CD4-positive, alpha-beta T cell (primary cell): ENCODE measurements at regions of chrX and their contacts with region 1.

Region 1: DNA sequence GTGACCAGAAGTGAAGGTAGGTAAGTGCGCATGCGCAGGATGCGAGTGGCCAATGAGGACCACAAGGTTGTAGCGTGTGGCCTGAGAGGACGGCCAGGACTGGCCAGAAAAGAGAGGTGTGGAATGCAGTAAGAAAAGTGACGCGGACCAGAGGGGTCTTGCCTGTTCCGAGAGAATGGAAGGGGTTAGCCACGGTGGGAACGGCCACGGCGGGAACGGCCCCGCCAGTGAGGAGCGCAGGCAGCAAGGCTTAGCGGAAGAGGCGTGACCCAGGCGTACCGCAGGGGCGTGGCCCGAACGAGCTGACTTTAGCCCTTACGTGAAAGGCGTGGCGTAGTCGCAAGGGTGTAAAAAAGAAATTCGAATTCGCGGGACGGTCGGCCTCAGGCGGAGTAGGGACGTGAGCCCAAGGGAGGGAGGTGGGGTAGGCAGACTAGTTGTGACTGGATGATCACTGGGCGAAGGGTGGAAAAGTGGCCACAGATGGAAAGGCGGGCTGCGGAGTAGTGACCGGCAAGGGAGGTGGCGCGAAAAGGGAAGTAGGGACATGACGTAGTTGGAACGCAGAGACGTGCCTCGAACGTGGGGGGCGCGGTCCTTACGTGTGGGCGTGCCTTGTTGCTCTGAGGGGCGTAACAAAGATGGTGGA is 10.4 kb upstream of the CLTRN start:
- DNase-seq: peak; percentile 78 to 96 (median 86)
- ATAC-seq: peak; percentile 83
- H3K4me3 ChIP-seq: peak overlapping the region; percentile 90
- H3K4me3 Mint-ChIP-seq: no peak overlapping the region
- H3K27ac ChIP-seq: peak overlapping the region; percentile 99 to 100
- H3K27ac Mint-ChIP-seq: no peak overlapping the region
- H3K4me1 ChIP-seq: peaks cover 16% of the 10 kb centered on the region
- H3K4me1 Mint-ChIP-seq: no peaks in the 10 kb centered on the region
- H3K27me3 ChIP-seq: peaks cover 0 to 4% of the 10 kb centered on the region in 2 experiments
- H3K27me3 Mint-ChIP-seq: no peaks in the 10 kb centered on the region
- CTCF ChIP-seq: no peak

Region 2: DNA sequence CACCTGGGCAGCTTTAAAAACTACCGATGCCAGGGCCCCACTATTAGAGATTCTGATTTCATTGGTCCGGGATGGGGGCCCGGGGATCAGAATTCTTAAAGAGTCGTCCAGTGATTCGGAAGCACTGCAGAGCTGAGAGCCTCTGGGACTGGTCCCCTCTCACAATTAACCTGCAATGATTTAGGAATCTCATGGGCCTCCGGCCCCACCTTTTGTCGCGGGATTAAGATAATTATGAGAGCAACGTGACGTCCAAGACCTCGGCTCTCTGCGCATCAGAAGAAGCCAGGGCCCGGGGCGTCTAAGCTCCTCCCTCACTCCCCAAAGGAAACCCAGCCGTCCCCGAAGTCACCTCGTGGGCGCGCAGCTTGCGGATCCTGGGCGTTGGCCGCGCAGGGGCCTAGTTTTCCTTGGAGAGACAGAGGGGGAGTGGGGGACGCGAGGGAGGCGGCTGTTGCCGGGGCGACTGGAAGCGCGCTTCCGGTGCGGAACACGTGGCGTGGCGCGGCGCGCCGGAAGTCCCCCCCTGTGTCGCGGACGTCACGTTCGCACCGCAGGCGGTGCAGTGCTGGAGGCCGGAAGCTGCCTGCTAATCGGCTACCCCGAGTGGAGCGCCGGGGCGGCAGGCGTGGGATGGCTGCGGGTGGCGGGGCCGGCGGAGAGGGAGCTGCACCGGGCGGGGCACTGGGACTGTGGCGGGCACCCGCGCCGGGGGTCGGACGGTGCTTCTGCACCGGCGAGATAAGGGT is 1645.4 kb before region 1 on chrX and contains the start of gene GEMIN8:
- CTCF ChIA-PET with region 1: no interaction called
- POLR2A ChIA-PET with region 1: no interaction called
- intact Hi-C with region 1: loop called in 1 of 2 experiments (anchors 10 kb)
- DNase-seq: peak; percentile 73 to 94 (median 84)
- ATAC-seq: peak; percentile 85
- H3K4me3 ChIP-seq: peak within 1 kb of the TSS; percentile 82
- H3K4me3 Mint-ChIP-seq: peak within 1 kb of the TSS; percentile 99
- H3K27ac ChIP-seq: peak within 1 kb of the TSS; percentile 82 to 93
- H3K27ac Mint-ChIP-seq: peak within 1 kb of the TSS; percentile 97
- H3K4me1 ChIP-seq: peaks cover 29% of the 10 kb centered on the region
- H3K4me1 Mint-ChIP-seq: peaks cover 52% of the 10 kb centered on the region
- H3K27me3 ChIP-seq: no peaks in the 10 kb centered on the region
- H3K27me3 Mint-ChIP-seq: no peaks in the 10 kb centered on the region
- CTCF ChIP-seq: no peak
- total RNA-seq, gene GEMIN8: 10.2 to 11.1 TPM

Region 3: DNA sequence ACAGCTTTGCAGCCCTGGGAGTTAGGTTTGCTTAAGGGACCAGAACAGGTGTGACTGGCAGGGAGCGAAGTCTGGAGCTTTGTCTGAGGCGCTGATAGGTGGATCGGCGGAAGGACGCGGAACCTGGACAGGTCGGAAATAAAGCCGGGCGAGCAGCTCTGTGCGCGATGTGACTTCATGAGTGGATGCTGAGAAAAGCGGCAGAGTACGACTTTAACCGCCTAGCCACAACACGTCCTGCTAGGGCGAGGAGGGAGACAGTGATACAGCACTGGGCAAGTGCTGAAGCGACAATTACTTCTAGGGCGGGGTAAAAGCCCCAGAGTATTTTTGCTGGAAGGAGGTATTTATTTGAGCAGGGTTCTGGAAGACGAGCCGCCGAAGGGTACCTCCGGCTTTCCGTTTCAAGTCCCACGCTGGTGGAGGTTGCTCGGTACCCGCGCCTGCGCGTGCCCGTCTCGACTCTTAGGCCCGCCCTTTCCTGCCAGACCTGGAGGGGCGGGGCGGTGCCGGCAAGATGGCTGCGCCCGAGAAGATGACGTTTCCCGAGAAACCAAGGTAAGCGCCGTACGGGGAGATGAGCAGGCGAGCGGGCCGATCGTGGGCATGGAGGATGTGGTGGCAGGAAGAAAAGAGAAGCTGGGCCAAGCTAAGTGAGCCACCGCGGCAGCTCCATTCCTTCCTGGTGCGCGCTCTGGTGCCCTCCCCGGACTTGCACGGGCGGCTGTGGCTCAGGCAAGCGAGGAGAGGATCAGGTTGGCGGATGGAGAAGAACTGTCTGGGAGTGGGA is 115.2 kb after region 1 on chrX and contains the start of gene ZRSR2:
- CTCF ChIA-PET with region 1: no interaction called
- POLR2A ChIA-PET with region 1: interaction called, 12 read pairs
- intact Hi-C with region 1: loop called (anchors 2 to 10 kb)
- DNase-seq: peak; percentile 72 to 94 (median 86)
- ATAC-seq: peak; percentile 90
- H3K4me3 ChIP-seq: peak within 1 kb of the TSS; percentile 86
- H3K4me3 Mint-ChIP-seq: no peak within 1 kb of the TSS
- H3K27ac ChIP-seq: peak within 1 kb of the TSS; percentile 87 to 92
- H3K27ac Mint-ChIP-seq: no peak within 1 kb of the TSS
- H3K4me1 ChIP-seq: peaks cover 27% of the 10 kb centered on the region
- H3K4me1 Mint-ChIP-seq: peaks cover 13% of the 10 kb centered on the region
- H3K27me3 ChIP-seq: no peaks in the 10 kb centered on the region
- H3K27me3 Mint-ChIP-seq: no peaks in the 10 kb centered on the region
- CTCF ChIP-seq: no peak
- total RNA-seq, gene ZRSR2: 18.4 to 21.1 TPM

Region 4: DNA sequence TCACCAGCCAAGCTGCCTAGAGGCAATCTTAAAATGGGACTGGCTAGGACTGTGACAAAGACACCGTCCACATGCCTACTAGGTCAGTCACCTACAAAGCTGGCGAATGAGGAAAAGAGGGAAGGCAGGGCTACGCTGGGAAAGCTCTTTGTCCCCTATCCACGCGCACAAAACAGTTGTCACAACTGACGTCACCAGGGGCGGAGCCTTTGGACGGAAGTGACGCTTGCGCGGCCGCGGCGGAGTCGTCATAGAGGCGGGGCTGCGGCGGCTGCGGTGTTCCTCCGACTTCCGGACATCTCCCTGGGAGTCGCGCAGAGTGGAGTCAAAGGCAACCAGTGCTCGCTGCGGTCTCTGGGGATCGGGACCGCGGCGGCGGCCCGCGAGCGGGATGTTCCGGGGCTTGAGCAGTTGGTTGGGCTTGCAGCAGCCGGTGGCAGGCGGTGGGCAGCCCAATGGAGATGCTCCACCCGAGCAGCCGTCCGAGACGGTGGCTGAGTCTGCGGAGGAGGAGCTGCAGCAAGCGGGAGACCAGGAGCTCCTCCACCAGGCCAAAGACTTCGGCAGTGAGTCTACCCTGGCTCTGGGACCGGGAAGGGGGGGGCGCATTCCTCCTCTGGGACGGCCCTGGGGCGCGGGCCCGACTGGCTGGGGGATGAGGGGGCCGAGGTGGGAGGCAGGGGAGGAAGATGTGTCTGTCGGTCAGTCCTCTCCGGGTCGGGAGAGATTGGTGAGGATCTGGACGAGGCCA is 1044.5 kb after region 1 on chrX and contains the start of gene SYAP1:
- CTCF ChIA-PET with region 1: no interaction called
- POLR2A ChIA-PET with region 1: no interaction called
- intact Hi-C with region 1: loop called in 1 of 2 experiments (anchors 10 kb)
- DNase-seq: peak; percentile 81 to 98 (median 92)
- ATAC-seq: peak; percentile 86
- H3K4me3 ChIP-seq: peak within 1 kb of the TSS; percentile 69
- H3K4me3 Mint-ChIP-seq: peak within 1 kb of the TSS; percentile 97
- H3K27ac ChIP-seq: peak within 1 kb of the TSS; percentile 89 to 96
- H3K27ac Mint-ChIP-seq: peak within 1 kb of the TSS; percentile 100
- H3K4me1 ChIP-seq: peaks cover 20% of the 10 kb centered on the region
- H3K4me1 Mint-ChIP-seq: peaks cover 44% of the 10 kb centered on the region
- H3K27me3 ChIP-seq: no peaks in the 10 kb centered on the region
- H3K27me3 Mint-ChIP-seq: no peaks in the 10 kb centered on the region
- CTCF ChIP-seq: no peak
- total RNA-seq, gene SYAP1: 60.2 to 65.2 TPM

Region 5: GRCh38 chrX:16870095-16870860 is 1195.3 kb after region 1 on chrX and contains the start of gene RBBP7:
- CTCF ChIA-PET with region 1: no interaction called
- POLR2A ChIA-PET with region 1: no interaction called
- intact Hi-C with region 1: loop called in 1 of 2 experiments (anchors 5 kb)
- DNase-seq: peak; percentile 81 to 96 (median 90)
- ATAC-seq: peak; percentile 81
- H3K4me3 ChIP-seq: peak within 1 kb of the TSS; percentile 82
- H3K4me3 Mint-ChIP-seq: peak within 1 kb of the TSS; percentile 99
- H3K27ac ChIP-seq: peak within 1 kb of the TSS; percentile 83 to 95
- H3K27ac Mint-ChIP-seq: peak within 1 kb of the TSS; percentile 99
- H3K4me1 ChIP-seq: peaks cover 16% of the 10 kb centered on the region
- H3K4me1 Mint-ChIP-seq: peaks cover 38% of the 10 kb centered on the region
- H3K27me3 ChIP-seq: no peaks in the 10 kb centered on the region
- H3K27me3 Mint-ChIP-seq: no peaks in the 10 kb centered on the region
- CTCF ChIP-seq: no peak
- total RNA-seq, gene RBBP7: 104 to 110 TPM